CD8-positive, alpha-beta T cell (primary cell): ENCODE measurements at regions of chr7 and their contacts with region 1.

Region 1: DNA sequence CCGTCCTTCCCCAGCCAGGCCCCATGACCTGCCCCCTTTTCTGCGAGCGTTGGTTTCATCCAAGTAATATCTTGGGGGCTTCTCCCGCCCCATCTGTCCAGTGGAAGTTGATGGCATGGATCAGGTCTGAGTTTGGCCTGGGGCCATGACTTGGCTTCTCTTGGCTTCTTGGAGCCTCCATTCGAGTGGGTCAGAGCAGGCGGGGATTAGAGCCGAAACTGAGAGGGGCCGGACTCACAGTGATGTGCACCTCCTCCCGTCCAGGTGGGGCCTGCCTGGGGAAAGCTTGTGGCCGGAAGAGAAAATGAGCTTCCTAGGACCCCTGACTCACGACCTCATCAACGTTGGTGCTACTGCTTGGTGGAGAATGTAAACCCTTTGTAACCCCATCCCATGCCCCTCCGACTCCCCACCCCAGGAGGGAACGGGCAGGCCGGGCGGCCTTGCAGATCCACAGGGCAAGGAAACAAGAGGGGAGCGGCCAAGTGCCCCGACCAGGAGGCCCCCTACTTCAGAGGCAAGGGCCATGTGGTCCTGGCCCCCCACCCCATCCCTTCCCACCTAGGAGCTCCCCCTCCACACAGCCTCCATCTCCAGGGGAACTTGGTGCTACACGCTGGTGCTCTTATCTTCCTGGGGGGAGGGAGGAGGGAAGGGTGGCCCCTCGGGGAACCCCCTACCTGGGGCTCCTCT is 15.1 kb upstream of the LIMK1 start:
- DNase-seq: no peak
- ATAC-seq: no peak
- H3K4me3 ChIP-seq: no peak overlapping the region
- H3K4me3 Mint-ChIP-seq: no peak overlapping the region
- H3K27ac ChIP-seq: no peak overlapping the region
- H3K27ac Mint-ChIP-seq: no peak overlapping the region
- H3K4me1 ChIP-seq: no peaks in the 10 kb centered on the region
- H3K4me1 Mint-ChIP-seq: peaks cover 2% of the 10 kb centered on the region
- H3K27me3 ChIP-seq: no peaks in the 10 kb centered on the region
- H3K27me3 Mint-ChIP-seq: no peaks in the 10 kb centered on the region
- CTCF ChIP-seq: no peak

Region 2: DNA sequence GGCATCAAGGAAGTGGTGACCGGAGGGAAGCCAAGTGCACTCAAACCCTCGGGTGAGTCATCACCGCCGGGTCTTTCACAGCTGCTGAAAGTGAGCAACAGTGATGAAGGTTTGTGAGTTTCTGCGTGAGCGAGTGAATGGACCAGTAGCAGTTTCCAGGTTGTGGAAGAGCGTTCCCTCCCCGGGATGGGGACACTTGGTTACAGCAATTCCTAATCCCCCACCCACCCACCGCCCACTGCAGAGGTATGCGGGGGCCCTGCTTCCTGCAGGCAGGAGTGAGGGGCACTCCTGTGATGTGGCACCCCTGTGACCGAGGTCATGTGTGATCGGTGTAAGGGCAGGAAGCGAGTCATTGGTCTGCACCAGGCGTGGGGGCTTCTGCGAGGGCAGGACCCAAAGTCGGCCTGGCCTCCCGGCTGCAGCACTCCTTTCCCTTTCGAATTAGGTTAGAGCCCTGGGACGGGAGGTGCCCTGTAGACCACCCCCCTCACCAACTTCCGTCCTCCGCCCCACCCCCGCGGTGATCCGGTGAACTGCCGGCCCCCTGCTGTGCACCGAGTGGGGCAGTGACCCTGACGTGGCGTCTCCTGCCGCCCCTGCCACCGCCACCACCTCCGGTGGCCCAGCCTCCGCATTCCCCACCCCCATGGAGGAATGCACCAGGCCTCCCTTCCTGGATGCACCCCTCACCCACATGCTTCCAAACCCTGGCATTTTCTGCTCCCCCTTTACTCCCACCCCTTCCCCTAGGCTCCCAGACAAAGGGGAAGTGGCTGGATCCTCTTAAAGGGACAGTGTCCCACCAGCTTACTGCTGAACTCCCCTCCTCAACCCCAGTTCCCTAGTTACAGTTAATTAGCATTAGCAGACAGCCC is 25.9 kb after region 1 on chr7:
- CTCF ChIA-PET with region 1: interaction called, 7 read pairs
- POLR2A ChIA-PET with region 1: no interaction called
- intact Hi-C with region 1: loop called in 1 of 2 experiments (anchors 1 kb)
- DNase-seq: peak; percentile 34 to 88 (median 78)
- ATAC-seq: peak; percentile 74
- H3K4me3 ChIP-seq: peak overlapping the region; percentile 43 to 57
- H3K4me3 Mint-ChIP-seq: peak overlapping the region; percentile 83
- H3K27ac ChIP-seq: peak overlapping the region; percentile 72 to 89
- H3K27ac Mint-ChIP-seq: peak overlapping the region; percentile 94
- H3K4me1 ChIP-seq: peaks cover 27% of the 10 kb centered on the region
- H3K4me1 Mint-ChIP-seq: peaks cover 23% of the 10 kb centered on the region
- H3K27me3 ChIP-seq: no peaks in the 10 kb centered on the region
- H3K27me3 Mint-ChIP-seq: no peaks in the 10 kb centered on the region
- CTCF ChIP-seq: no peak

Region 3: GRCh38 chr7:74115326-74115725 is 46.8 kb after region 1 on chr7:
- CTCF ChIA-PET with region 1: no interaction called
- POLR2A ChIA-PET with region 1: no interaction called
- intact Hi-C with region 1: loop called in 1 of 2 experiments (anchors 5 kb)
- DNase-seq: peak in 1 of 9 experiments; percentile 29
- ATAC-seq: no peak
- H3K4me3 ChIP-seq: no peak overlapping the region
- H3K4me3 Mint-ChIP-seq: no peak overlapping the region
- H3K27ac ChIP-seq: no peak overlapping the region
- H3K27ac Mint-ChIP-seq: no peak overlapping the region
- H3K4me1 ChIP-seq: no peaks in the 10 kb centered on the region
- H3K4me1 Mint-ChIP-seq: no peaks in the 10 kb centered on the region
- H3K27me3 ChIP-seq: no peaks in the 10 kb centered on the region
- H3K27me3 Mint-ChIP-seq: no peaks in the 10 kb centered on the region
- CTCF ChIP-seq: no peak

Region 4: GRCh38 chr7:74183613-74184450 is 115.3 kb after region 1 on chr7:
- CTCF ChIA-PET with region 1: interaction called, 7 read pairs
- POLR2A ChIA-PET with region 1: no interaction called
- intact Hi-C with region 1: loop called (anchors 2 to 5 kb)
- DNase-seq: peak in 4 of 9 experiments; percentile 19 to 54 (median 36)
- ATAC-seq: peak; percentile 75
- H3K4me3 ChIP-seq: no peak overlapping the region
- H3K4me3 Mint-ChIP-seq: no peak overlapping the region
- H3K27ac ChIP-seq: peak overlapping the region in 1 of 2 experiments; percentile 40
- H3K27ac Mint-ChIP-seq: peak overlapping the region; percentile 78
- H3K4me1 ChIP-seq: peaks cover 74% of the 10 kb centered on the region
- H3K4me1 Mint-ChIP-seq: peaks cover 89% of the 10 kb centered on the region
- H3K27me3 ChIP-seq: no peaks in the 10 kb centered on the region
- H3K27me3 Mint-ChIP-seq: no peaks in the 10 kb centered on the region
- CTCF ChIP-seq: no peak